ENCODE measurements at regions of chr14 and their contacts with region 1.

Region 1: DNA sequence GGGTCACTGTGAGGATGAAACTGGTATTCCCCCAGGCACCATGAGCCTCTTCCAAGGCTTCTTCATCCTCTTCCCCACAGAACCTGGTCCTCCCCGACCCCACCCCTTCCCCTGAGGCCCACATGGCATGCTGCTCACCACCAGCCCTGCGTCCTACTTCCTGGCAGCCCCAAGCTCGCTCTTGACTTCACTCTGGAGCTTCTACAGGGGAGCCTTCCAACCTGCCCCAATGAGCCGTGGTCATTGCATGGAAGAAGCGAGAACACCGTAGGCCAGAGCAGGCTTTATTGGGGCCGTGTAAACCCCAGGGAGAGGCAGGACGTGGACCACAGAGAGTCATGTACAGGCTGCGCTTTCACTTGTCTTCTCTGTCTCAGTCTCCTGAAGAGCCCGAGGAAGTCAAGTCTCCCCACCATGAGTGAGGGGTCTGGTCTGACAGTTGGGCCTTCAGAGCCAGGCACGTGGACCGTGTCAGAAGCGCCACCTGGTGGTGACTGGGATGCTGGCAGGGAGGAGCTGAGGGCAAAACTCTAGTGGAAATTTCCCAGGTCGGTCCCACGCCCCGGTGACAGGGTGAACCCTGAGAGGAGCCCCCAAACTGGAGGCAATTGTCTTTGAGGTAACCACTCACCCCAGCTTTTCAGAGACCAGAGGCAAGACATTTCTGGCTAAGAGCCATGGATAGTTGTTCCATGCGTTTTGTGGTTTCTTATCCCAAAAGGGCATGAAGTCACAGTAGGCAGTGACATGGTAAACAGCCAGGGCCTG is 17.5 kb downstream of the RPS6KL1 start:
- DNase-seq: peak; percentile 63 to 95
- H3K4me3 ChIP-seq: no peak overlapping the region
- CTCF ChIP-seq: peak in 1 of 3 donors; percentile 68
- POLR2A ChIP-seq: no peak

Region 2: DNA sequence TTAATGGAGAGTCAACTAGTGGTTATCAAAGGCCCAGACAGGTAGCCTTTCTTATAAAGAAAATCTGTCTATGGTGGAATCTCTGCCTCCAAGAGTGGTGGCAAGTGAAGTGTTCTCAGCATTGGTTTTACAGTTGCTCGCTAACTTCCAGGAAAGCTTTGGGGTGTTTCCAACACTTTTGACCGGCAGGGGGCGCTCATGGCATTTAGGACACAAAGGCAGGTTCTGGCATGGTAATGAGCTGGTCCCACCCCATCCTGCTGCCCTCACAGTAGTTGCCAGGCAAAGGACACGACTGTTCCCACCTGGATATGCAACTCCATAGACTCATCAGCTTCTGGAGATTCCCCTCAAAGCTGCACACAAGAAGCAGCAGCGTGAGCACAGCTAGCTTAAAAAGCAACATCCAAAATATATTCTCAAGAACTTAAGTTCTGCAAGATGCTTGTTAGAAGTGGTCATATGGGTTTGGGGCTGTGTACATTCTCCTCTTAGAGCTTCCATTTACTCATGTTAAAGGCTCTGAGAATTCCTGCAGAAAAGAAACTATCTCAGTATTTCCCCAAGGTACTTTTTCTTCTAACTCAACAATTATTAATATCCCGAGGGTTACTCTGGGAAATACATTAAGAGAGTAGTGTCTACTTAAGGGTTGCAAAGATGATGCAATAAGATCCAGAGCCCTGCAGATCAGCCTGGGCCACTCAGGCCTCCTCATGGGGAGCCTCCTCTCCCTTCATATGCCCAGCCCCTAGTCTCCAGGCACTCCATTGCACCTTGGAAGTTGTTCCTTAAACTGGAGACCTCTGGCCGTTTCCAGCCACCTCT is 44.4 kb before region 1 on chr14:
- intact Hi-C with region 1: loop called (anchors 5 kb)
- DNase-seq: peak; percentile 88 to 98
- H3K4me3 ChIP-seq: no peak overlapping the region
- CTCF ChIP-seq: peak in 1 of 3 donors; percentile 46
- POLR2A ChIP-seq: no peak